ENCODE measurements at regions of chr15 and their contacts with region 1.

Region 1: GRCh38 chr15:26082221-26083109 is 219.3 kb upstream of the ATP10A start:
- DNase-seq: peak; percentile 78
- ATAC-seq: peak; percentile 96
- H3K4me3 Mint-ChIP-seq: peak overlapping the region; percentile 82
- H3K27ac Mint-ChIP-seq: peak overlapping the region; percentile 90
- H3K4me1 Mint-ChIP-seq: peaks cover 29% of the 10 kb centered on the region
- H3K27me3 Mint-ChIP-seq: no peaks in the 10 kb centered on the region
- CTCF ChIP-seq: no peak

Region 2: GRCh38 chr15:25693321-25694237 is 388.9 kb before region 1 on chr15:
- CTCF ChIA-PET with region 1: no interaction called
- POLR2A ChIA-PET with region 1: no interaction called
- intact Hi-C with region 1: loop called (anchors 5 kb)
- DNase-seq: no peak
- ATAC-seq: no peak
- H3K4me3 Mint-ChIP-seq: no peak overlapping the region
- H3K27ac Mint-ChIP-seq: no peak overlapping the region
- H3K4me1 Mint-ChIP-seq: no peaks in the 10 kb centered on the region
- H3K27me3 Mint-ChIP-seq: no peaks in the 10 kb centered on the region
- CTCF ChIP-seq: no peak

Region 3: GRCh38 chr15:25739687-25740121 is 342.8 kb before region 1 on chr15:
- CTCF ChIA-PET with region 1: no interaction called
- POLR2A ChIA-PET with region 1: no interaction called
- intact Hi-C with region 1: loop called (anchors 5 kb)
- DNase-seq: no peak
- ATAC-seq: peak; percentile 78
- H3K4me3 Mint-ChIP-seq: no peak overlapping the region
- H3K27ac Mint-ChIP-seq: no peak overlapping the region
- H3K4me1 Mint-ChIP-seq: peaks cover 20% of the 10 kb centered on the region
- H3K27me3 Mint-ChIP-seq: peaks cover 37% of the 10 kb centered on the region
- CTCF ChIP-seq: no peak

Region 4: GRCh38 chr15:25939122-25939521 is 143.3 kb before region 1 on chr15:
- CTCF ChIA-PET with region 1: no interaction called
- POLR2A ChIA-PET with region 1: no interaction called
- intact Hi-C with region 1: loop called (anchors 2 kb)
- DNase-seq: peak; percentile 23
- ATAC-seq: peak; percentile 93
- H3K4me3 Mint-ChIP-seq: peak overlapping the region; percentile 32
- H3K27ac Mint-ChIP-seq: no peak overlapping the region
- H3K4me1 Mint-ChIP-seq: peaks cover 28% of the 10 kb centered on the region
- H3K27me3 Mint-ChIP-seq: no peaks in the 10 kb centered on the region
- CTCF ChIP-seq: no peak

Region 5: GRCh38 chr15:26340376-26340775 is 257.9 kb after region 1 on chr15:
- CTCF ChIA-PET with region 1: no interaction called
- POLR2A ChIA-PET with region 1: no interaction called
- intact Hi-C with region 1: no loop called
- DNase-seq: no peak
- ATAC-seq: no peak
- H3K4me3 Mint-ChIP-seq: no peak overlapping the region
- H3K27ac Mint-ChIP-seq: no peak overlapping the region
- H3K4me1 Mint-ChIP-seq: no peaks in the 10 kb centered on the region
- H3K27me3 Mint-ChIP-seq: no peaks in the 10 kb centered on the region
- CTCF ChIP-seq: no peak